Ascending aorta (tissue), 2 donors: ENCODE measurements at regions of chr17 and their contacts with region 1.

Region 1: DNA sequence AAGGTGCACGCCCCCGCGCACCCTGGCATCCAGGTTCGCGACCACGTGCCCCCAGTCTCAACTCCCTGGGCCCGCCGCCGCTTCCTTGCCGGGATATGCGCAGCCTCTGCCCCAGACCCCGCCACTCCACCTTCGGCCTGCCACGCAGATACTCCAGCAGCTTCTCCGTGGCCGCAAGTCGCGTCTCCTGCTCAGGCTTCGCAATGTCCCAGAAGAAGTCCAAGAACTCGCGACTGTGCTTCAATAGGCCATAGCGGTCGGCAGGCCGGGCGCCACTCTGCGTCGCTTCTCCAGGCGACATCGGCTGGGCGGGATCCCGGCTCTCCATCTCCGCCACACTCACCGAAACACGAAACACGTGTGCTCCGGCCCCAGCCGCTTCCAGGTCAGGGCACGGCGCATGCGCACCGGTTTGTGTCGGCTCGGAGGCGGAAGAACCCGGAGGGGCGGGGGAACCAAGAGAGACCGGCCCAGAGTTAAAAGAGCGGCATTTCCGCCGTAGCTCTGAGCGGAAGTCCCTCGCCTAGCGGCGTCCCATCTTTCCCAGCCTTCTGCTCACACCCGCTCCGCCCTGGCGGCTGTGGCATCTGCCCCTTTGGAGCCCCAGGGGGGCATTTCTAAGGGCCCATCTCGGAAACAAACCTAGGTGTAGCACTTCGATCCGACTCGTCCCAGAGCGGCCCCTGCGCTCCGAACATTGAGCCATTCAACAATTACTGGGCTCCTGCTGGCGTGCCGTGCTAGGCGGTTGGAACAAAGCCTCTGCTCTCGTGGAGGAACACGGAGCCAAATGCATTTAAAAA is at the start of gene MYBBP1A:
- DNase-seq: peak; percentile 82 to 98
- H3K4me3 ChIP-seq: peak within 1 kb of the TSS; percentile 71 to 86
- H3K27ac ChIP-seq: peak within 1 kb of the TSS; percentile 76 to 85
- H3K4me1 ChIP-seq: peaks cover 8 to 12% of the 10 kb centered on the region in 2 donors
- H3K27me3 ChIP-seq: no peaks in the 10 kb centered on the region
- CTCF ChIP-seq: peak in 2 of 3 experiments; percentile 12 to 22
- total RNA-seq, gene MYBBP1A: 94.5 TPM

Region 2: DNA sequence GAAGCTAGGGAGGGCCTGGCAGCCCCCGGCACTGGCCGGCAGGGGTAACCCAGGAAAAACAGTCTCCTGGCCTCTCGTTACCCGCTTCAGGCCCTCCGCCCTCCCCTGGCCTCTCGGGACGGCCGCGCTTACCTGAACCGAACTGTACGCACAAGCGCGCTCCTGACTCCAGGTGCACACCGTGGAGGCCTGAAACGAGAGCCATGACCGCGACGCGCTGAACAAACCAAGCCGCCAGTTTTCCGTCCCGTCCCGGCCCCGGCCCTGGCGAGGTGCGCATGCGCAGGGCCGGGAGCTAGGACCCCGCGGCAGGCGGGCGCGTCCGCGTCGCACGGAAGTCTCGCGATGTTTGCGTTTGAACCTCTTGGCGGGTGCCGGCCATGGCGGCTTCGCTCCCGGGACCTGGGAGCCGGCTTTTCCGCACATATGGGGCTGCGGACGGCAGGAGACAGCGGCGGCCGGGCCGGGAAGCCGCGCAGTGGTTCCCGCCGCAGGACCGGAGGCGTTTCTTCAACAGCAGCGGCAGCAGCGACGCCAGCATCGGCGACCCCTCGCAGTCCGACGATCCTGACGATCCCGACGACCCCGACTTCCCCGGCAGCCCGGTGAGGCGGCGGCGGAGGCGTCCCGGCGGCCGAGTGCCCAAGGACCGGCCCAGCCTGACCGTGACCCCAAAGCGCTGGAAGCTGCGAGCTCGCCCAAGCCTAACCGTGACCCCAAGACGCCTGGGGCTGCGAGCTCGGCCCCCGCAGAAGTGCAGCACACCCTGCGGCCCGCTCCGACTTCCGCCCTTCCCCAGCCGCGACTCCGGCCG is 831.4 kb before region 1 on chr17 and contains the start of gene HASPIN:
- intact Hi-C with region 1: loop called (anchors 10 kb)
- DNase-seq: peak; percentile 45 to 91
- H3K4me3 ChIP-seq: peak within 1 kb of the TSS; percentile 58 to 77
- H3K27ac ChIP-seq: peak within 1 kb of the TSS; percentile 72 to 75
- H3K4me1 ChIP-seq: peaks cover 7 to 11% of the 10 kb centered on the region in 2 donors
- H3K27me3 ChIP-seq: no peaks in the 10 kb centered on the region
- CTCF ChIP-seq: peak; percentile 8 to 37 (median 17)
- total RNA-seq, gene HASPIN: 2.7 TPM

Region 3: DNA sequence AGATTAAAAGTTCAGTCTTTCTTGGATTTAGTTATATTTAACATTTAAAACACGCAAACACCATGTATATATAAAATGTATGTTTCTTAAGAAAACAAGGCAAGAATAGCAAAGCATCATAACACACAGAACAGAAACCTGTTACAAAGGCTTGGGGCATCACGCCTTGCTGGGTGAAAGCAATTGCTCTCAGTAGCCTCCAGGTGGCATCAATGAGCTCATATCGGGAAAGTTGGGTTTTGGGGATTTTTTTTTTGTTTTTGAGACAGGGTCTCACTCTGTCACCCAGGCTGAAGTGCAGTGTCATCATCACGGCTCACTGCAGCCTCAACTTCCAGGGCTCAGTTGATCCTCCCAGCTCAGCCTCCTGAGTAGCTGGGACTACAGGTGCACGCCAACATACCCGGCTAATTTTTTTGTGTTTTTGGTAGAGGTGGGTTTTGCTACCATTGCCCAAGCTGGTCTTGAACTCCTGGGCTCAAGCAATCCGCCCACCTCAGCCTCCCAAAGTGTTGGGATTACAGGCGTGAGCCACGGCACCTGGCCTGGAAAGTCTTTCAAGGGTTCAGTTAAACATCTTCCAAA is 355.3 kb before region 1 on chr17:
- intact Hi-C with region 1: loop called (anchors 10 kb)
- DNase-seq: peak in 1 of 2 donors; percentile 59
- H3K4me3 ChIP-seq: no peak overlapping the region
- H3K27ac ChIP-seq: no peak overlapping the region
- H3K4me1 ChIP-seq: peaks cover 0 to 11% of the 10 kb centered on the region in 2 donors
- H3K27me3 ChIP-seq: no peaks in the 10 kb centered on the region
- CTCF ChIP-seq: peak; percentile 43 to 74 (median 70)

Region 4: DNA sequence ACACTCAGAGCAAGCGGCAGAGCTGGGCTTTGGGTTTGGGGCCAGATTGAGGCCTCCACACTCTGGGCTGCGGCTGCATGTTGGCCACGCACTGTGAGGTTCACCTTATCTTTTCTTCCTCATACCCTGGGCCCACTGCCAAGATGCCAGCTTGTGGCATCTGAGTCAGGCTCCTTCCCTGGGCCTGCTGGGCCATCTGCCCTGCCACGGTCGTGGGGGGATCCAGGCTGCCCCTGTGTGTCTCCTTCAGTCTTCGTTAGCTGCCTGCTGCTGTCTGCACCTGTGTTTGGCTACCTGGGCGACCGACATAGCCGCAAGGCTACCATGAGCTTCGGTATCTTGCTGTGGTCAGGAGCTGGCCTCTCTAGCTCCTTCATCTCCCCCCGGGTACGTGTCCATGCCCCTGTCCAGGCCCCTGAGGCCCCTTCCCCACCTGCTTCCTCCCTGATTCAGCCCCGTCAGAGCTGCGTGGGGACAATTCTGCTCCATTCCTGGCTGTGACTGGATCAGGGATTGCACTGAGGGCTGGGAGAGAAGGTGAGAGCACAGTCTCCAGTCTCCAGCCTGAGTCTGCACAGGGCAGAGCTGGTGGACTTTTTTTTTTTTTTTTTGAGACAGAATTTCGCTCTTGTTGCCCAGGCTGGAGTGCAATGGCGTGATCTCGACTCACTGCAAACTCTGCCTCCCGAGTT is 110.3 kb before region 1 on chr17:
- intact Hi-C with region 1: no loop called
- DNase-seq: peak in 1 of 2 donors; percentile 67
- H3K4me3 ChIP-seq: no peak overlapping the region
- H3K27ac ChIP-seq: no peak overlapping the region
- H3K4me1 ChIP-seq: no peaks in the 10 kb centered on the region
- H3K27me3 ChIP-seq: no peaks in the 10 kb centered on the region
- CTCF ChIP-seq: no peak

Region 5: DNA sequence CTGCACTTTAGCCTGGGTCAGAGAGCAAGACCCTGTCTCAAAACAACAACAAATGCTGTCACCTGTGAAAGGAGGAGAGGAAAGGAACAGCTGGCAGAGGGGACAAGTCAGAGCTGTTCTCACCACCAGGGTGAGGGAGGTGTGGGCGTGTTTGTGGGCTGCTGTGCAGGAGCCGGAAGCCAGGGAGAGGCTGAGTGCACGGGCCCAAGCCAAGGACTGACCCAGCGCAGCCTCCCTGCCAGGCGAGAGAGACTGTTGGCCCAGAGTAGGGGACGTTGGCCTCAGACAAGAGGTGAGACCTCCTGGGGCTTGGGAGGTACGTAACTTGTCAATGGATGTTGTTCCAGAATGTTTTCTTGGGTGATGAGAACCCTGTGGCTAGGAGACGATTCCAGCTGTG is 45.8 kb before region 1 on chr17:
- intact Hi-C with region 1: loop called (anchors 2 kb)
- DNase-seq: peak; percentile 41 to 89
- H3K4me3 ChIP-seq: no peak overlapping the region
- H3K27ac ChIP-seq: peak overlapping the region; percentile 84 to 87
- H3K4me1 ChIP-seq: peaks cover 25 to 36% of the 10 kb centered on the region in 2 donors
- H3K27me3 ChIP-seq: no peaks in the 10 kb centered on the region
- CTCF ChIP-seq: peak in 1 of 3 experiments; percentile 6